ENCODE measurements at regions of chr2 and their contacts with region 1.

Region 1: DNA sequence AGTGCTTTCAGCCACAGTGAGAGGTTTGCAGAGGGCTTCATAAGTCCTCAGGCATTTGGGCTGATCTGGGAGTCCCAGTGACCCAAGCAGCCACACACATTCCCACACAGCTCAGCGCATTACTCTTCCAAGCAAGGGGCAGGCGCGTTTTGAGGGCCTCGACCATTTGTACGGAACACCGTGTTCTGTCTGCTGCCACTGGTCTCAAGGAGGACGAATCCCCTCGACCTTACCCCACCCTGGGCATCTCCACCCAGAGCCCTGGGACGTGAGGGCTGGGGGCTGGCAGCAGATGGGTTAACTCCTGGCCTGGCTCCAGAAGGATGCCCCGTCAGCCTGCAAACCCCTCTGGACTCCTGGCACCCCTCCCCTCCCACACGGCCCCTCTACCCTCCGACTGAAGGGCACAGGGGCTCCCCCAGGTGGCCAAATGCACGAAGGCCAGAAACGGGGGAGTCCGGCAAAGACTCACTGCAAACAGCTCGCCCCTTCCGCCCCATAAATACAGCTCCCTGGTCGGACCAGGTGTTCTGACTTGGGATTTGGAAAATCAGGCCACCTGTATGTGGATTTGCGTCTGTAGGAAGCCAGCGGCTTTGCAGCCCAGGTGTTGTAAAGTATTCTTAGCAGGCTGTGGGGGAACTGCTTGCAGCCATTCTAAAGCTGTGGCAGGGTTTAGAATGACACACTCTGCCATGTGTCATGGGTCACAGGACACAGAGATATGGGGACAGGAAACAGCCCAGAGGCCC is 33.6 kb upstream of the PTMA start:
- DNase-seq: no peak
- H3K4me3 ChIP-seq: no peak overlapping the region
- H3K27ac ChIP-seq: no peak overlapping the region
- H3K4me1 ChIP-seq: peaks cover 25% of the 10 kb centered on the region
- H3K27me3 ChIP-seq: no peaks in the 10 kb centered on the region
- CTCF ChIP-seq: peak; percentile 58 to 91

Region 2: DNA sequence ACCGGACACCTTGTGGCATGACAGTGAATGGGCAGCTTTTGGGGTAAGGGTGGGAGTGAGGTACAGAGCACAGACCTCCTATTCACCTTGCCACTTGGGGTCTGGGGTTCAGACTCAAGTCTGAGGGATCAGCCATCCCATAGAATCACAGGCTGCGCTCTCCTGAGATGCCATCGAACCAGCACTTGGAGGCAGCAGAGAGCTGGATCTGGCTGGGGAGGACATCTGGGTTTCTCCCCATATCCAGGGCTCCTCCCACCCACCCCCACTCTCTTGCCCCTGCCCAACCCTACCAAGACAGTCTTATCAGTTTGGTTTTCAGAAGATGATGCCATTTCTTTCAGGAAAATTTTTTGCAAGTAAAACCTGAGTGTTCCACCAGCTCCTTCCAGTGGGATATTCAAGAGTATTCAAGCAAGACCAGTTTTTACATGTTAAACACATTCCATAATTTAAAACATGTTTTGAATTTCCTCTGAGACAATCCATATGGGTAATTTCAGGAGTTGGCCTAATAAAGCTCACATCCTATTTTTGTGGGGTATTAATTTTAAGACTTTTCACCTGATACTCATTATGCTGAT is 111.3 kb before region 1 on chr2:
- CTCF ChIA-PET with region 1: interaction called, 3 read pairs
- dilution Hi-C with region 1: no loop called
- in situ Hi-C with region 1: no loop called
- intact Hi-C with region 1: loop called (anchors 1 kb)
- DNase-seq: peak; percentile 33
- H3K4me3 ChIP-seq: no peak overlapping the region
- H3K27ac ChIP-seq: no peak overlapping the region
- H3K4me1 ChIP-seq: no peaks in the 10 kb centered on the region
- H3K27me3 ChIP-seq: no peaks in the 10 kb centered on the region
- CTCF ChIP-seq: peak; percentile 66 to 87

Region 3: GRCh38 chr2:231648587-231649174 is 26.1 kb before region 1 on chr2:
- CTCF ChIA-PET with region 1: interaction called, 7 read pairs
- dilution Hi-C with region 1: no loop called
- in situ Hi-C with region 1: no loop called
- intact Hi-C with region 1: loop called (anchors 1 kb)
- DNase-seq: peak; percentile 52
- H3K4me3 ChIP-seq: no peak overlapping the region
- H3K27ac ChIP-seq: no peak overlapping the region
- H3K4me1 ChIP-seq: peaks cover 6% of the 10 kb centered on the region
- H3K27me3 ChIP-seq: no peaks in the 10 kb centered on the region
- CTCF ChIP-seq: peak; percentile 59 to 86

Region 4: DNA sequence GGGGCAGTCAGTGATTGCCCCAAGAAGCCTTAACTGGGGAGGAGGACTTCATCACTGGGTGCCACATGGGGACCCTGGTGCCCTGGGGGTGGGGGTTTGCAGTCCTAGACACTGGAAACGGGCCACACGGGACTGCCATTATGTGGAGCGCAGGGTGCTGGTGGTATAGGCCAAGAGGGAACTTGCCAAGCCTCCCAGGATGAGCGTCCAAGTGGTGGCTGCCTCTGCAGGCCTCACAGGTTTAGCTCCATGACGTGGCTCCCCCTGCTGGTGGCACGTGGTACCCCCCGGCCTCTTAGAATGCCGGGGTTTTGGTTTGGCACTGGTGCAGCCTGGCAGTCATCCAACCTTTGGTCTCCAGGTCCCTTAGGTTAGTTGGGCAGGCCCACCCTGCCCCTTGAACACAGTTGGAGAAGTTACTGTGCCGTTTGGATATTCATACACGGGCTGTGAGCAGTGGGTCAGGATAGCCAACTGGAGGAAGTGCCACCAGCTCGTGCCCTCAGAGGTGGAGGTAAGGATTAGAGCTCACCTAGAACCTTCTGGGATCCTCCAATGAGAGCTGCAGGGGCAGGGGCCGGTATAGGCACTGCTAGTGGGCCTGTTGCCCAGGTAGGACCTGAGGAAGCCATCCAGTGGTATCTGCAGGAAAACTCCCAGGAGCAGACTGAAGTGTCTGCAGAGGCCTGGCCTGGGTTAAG is 39.1 kb after region 1 on chr2:
- CTCF ChIA-PET with region 1: interaction called, 58 read pairs
- dilution Hi-C with region 1: no loop called
- in situ Hi-C with region 1: loop called in 1 of 2 experiments (anchors 5 kb)
- intact Hi-C with region 1: loop called (anchors 1 kb)
- DNase-seq: peak; percentile 74
- H3K4me3 ChIP-seq: no peak overlapping the region
- H3K27ac ChIP-seq: no peak overlapping the region
- H3K4me1 ChIP-seq: peaks cover 16% of the 10 kb centered on the region
- H3K27me3 ChIP-seq: no peaks in the 10 kb centered on the region
- CTCF ChIP-seq: peak; percentile 87 to 97

Region 5: GRCh38 chr2:231780909-231781797 is 106.4 kb after region 1 on chr2 and contains the start of gene PDE6D:
- CTCF ChIA-PET with region 1: no interaction called
- dilution Hi-C with region 1: no loop called
- in situ Hi-C with region 1: no loop called
- intact Hi-C with region 1: loop called (anchors 10 kb)
- DNase-seq: peak; percentile 100
- H3K4me3 ChIP-seq: peak within 1 kb of the TSS; percentile 65 to 95 (median 69)
- H3K27ac ChIP-seq: peak within 1 kb of the TSS; percentile 50
- H3K4me1 ChIP-seq: peaks cover 15% of the 10 kb centered on the region
- H3K27me3 ChIP-seq: no peaks in the 10 kb centered on the region
- CTCF ChIP-seq: no peak
- total RNA-seq, gene PDE6D: 15.2 to 16.2 TPM

Measured in mammary epithelial cell (primary cell).